Psoas muscle (tissue), 8 donors: ENCODE measurements at regions of chr17 and their contacts with region 1.

Region 1: GRCh38 chr17:59743842-59744241 is 36.4 kb downstream of the VMP1 start:
- DNase-seq: no peak
- ATAC-seq: no peak
- H3K4me3 ChIP-seq: no peak overlapping the region
- H3K27ac ChIP-seq: no peak overlapping the region
- H3K4me1 ChIP-seq: no peaks in the 10 kb centered on the region
- H3K27me3 ChIP-seq: no peaks in the 10 kb centered on the region
- CTCF ChIP-seq: no peak

Region 2: DNA sequence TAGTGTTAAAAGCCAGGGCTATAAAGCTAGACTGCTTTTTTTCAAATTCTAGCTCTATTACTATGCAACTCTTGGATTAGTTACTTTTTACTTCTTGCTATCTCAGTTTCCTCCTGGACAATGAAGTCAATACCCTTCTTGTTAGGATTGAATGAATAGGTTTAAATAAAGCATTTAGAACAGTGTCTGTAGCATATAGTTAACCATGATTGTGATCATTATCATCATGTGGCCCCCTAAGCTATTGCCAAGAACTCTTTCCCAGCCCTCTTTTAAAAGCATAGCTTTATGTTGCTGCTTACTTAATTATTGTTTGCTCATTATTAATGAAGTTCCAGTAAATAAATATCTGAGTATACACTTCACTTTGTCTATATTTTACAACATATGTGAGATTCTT is 31.9 kb before region 1 on chr17:
- intact Hi-C with region 1: loop called in 1 of 2 experiments (anchors 2 kb)
- DNase-seq: no peak
- ATAC-seq: no peak
- H3K4me3 ChIP-seq: no peak overlapping the region
- H3K27ac ChIP-seq: no peak overlapping the region
- H3K4me1 ChIP-seq: peaks cover 33% of the 10 kb centered on the region
- H3K27me3 ChIP-seq: no peaks in the 10 kb centered on the region
- CTCF ChIP-seq: no peak

Region 3: DNA sequence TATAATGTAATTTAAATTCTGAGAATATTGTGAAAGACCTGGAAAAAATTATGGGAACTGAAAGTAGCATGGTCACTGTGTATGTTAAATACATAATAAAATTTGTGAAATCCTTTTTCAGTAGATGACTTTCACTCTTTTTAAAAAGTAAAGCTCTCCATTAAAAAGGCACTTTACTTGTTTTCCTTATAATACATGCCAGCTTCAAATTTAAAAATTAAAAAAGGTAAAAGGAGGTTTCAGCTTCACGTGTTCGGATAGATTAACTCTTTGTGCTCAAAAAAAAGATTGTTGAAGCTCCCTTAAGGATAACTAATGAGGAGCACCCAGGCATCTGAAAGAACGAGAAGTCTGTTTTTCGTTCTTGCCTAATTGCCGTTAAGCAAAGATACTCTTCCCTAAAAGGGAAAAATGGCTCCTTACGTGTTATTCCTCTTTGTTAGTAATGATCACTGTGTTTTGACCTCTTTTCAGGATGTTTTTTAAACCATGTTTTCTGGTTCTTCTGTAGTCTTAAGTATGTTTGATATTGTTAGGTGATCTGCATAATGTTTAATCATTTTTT is 61.1 kb after region 1 on chr17:
- intact Hi-C with region 1: no loop called
- DNase-seq: no peak
- ATAC-seq: no peak
- H3K4me3 ChIP-seq: peak overlapping the region; percentile 22
- H3K27ac ChIP-seq: no peak overlapping the region
- H3K4me1 ChIP-seq: no peaks in the 10 kb centered on the region
- H3K27me3 ChIP-seq: no peaks in the 10 kb centered on the region
- CTCF ChIP-seq: no peak